ENCODE measurements at regions of chr11 and their contacts with region 1.

Region 1: DNA sequence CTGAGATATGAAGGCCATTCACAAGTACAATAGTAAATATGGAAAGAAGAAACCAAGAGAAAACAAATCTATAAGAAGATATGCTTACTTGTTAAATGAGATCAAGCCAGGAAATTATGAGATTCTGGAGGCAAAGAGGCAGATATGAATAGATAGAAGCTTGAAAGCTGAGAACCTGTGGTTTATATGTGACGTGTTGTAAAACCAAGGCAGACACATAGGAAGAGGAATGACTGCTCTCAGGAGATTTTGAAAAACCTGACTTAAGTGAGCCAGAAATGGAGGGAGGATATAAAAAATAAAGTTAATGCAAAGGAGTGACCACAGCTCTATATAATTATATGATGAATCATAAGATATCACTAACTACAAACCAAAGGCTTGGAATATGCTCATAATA is 1160.5 kb upstream of the CNTN5 start:
- DNase-seq: no peak

Region 2: DNA sequence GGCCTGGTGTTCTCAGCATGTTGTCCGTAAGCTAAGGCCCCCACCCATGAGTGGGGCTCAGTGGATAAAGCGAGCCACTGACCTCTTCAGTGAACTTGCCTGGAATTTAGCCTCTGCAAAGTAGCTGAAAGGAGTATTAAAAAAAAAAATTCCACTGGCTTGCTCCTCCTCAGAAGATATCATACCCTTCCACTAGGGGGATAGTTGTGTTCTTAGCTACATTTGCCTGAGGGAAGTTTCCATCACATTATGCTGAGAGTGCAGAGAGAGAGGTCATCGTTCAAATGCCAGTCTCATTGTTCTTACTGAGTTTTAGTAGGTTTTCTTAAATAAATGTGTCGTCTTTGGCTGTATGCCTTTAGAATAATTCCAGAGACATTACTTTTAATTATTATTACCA is 590.7 kb before region 1 on chr11:
- intact Hi-C with region 1: loop called in 1 of 2 experiments (anchors 5 kb)
- DNase-seq: no peak

Region 3: GRCh38 chr11:97814325-97814959 is 45.8 kb before region 1 on chr11:
- intact Hi-C with region 1: no loop called
- DNase-seq: no peak